Transverse colon (tissue), 4 donors: ENCODE measurements at regions of chr7 and their contacts with region 1.

Region 1: GRCh38 chr7:13963925-13964324 is 25.5 kb downstream of the ETV1 start:
- DNase-seq: no peak
- H3K4me3 ChIP-seq: no peak overlapping the region
- H3K27ac ChIP-seq: no peak overlapping the region
- H3K4me1 ChIP-seq: no peaks in the 10 kb centered on the region
- H3K27me3 ChIP-seq: no peaks in the 10 kb centered on the region
- CTCF ChIP-seq: no peak
- EP300 ChIP-seq: no peak
- POLR2A ChIP-seq: no peak

Region 2: DNA sequence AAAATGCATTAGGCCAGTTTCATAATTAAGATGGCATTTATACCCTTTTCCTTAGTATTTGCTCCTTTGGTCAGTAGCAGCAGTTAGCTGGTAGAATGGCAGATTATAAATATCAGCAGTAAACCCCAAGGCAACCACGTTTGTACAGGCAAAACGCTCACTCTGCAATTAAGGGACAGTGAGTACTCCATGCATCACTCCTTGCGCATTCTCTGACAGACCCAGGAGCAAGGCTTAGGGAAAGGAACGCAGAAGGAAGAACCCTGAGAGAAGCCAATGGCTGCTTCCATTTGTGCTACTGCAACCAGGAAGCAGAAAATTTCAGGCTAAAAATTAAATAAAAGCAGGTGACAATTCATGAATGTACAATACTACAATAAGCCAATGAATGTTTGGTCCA is 12.7 kb after region 1 on chr7:
- in situ Hi-C with region 1: no loop called
- intact Hi-C with region 1: loop called (anchors 1 kb)
- DNase-seq: no peak
- H3K4me3 ChIP-seq: no peak overlapping the region
- H3K27ac ChIP-seq: no peak overlapping the region
- H3K4me1 ChIP-seq: peaks cover 3 to 19% (median 13%) of the 10 kb centered on the region in 4 donors
- H3K27me3 ChIP-seq: no peaks in the 10 kb centered on the region
- CTCF ChIP-seq: no peak
- EP300 ChIP-seq: no peak
- POLR2A ChIP-seq: no peak

Region 3: GRCh38 chr7:14048889-14049288 is 85.0 kb after region 1 on chr7:
- in situ Hi-C with region 1: no loop called
- intact Hi-C with region 1: no loop called
- DNase-seq: no peak
- H3K4me3 ChIP-seq: no peak overlapping the region
- H3K27ac ChIP-seq: no peak overlapping the region
- H3K4me1 ChIP-seq: no peaks in the 10 kb centered on the region
- H3K27me3 ChIP-seq: no peaks in the 10 kb centered on the region
- CTCF ChIP-seq: no peak
- EP300 ChIP-seq: no peak
- POLR2A ChIP-seq: no peak